Naive thymus-derived CD4-positive, alpha-beta T cell (primary cell): ENCODE measurements at regions of chr19 and their contacts with region 1.

Region 1: GRCh38 chr19:3062168-3063102 is at the start of gene TLE5:
- DNase-seq: peak; percentile 69 to 79 (median 76)
- ATAC-seq: peak; percentile 78
- H3K4me3 ChIP-seq: peak within 1 kb of the TSS; percentile 99
- H3K4me3 Mint-ChIP-seq: peak within 1 kb of the TSS; percentile 88 to 99 (median 94)
- H3K27ac ChIP-seq: peak within 1 kb of the TSS; percentile 90
- H3K27ac Mint-ChIP-seq: peak within 1 kb of the TSS; percentile 90 to 98 (median 95)
- H3K4me1 ChIP-seq: peaks cover 24 to 43% of the 10 kb centered on the region in 2 donors
- H3K4me1 Mint-ChIP-seq: peaks cover 13 to 45% (median 29%) of the 10 kb centered on the region in 7 donors
- H3K27me3 ChIP-seq: no peaks in the 10 kb centered on the region
- H3K27me3 Mint-ChIP-seq: peaks cover 0 to under 1% (median 0%) of the 10 kb centered on the region in 5 donors
- total RNA-seq, gene TLE5: 658 to 1,102 (median 755) TPM

Region 2: GRCh38 chr19:2820112-2820702 is 242.2 kb before region 1 on chr19:
- CTCF ChIA-PET with region 1: no interaction called
- POLR2A ChIA-PET with region 1: no interaction called
- intact Hi-C with region 1: loop called in 1 of 2 experiments (anchors 1 kb)
- DNase-seq: no peak
- ATAC-seq: no peak
- H3K4me3 ChIP-seq: peak overlapping the region; percentile 79
- H3K4me3 Mint-ChIP-seq: peak overlapping the region; percentile 79 to 90 (median 86)
- H3K27ac ChIP-seq: peak overlapping the region; percentile 76
- H3K27ac Mint-ChIP-seq: peak overlapping the region in 5 of 9 donors; percentile 22 to 80 (median 52)
- H3K4me1 ChIP-seq: peaks cover 3 to 4% of the 10 kb centered on the region in 2 donors
- H3K4me1 Mint-ChIP-seq: peaks cover 3 to 19% (median 6%) of the 10 kb centered on the region in 7 donors
- H3K27me3 ChIP-seq: no peaks in the 10 kb centered on the region
- H3K27me3 Mint-ChIP-seq: no peaks in the 10 kb centered on the region

Region 3: DNA sequence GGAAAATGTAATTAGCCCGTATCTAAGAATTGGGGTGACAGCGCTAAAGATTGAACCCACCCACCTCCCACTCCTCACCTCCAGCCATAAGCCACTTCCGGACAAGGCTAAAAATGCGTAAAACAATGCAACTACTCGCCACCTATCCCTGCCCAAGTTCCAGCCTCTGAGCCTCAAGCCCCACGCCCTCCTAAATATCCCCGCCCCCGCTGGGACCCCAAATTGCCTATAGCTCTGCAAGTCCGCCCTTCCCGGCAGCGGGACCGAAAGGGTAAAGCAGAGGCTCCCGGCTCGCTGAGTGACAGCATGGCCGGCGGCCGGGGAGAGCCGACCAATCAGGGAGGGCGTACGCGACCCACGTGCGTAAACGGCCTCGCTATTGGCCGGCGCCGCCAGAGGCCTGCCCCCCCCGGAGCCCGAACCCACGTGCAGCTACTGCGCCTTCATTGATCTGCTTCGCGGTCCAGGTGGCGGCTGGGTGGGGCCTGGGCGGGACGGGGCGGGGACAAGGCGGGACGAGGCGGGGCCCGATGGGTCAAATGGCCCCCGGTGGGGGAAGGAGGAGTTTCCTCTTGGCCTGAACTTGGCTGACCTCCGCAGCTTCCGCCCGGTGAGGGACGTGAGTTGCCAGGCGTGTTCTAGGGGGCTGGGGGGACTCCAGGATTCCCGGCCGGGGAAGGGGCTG is 85.3 kb before region 1 on chr19 and contains the start of gene TLE6:
- CTCF ChIA-PET with region 1: no interaction called
- POLR2A ChIA-PET with region 1: interaction called, 7 read pairs
- intact Hi-C with region 1: loop called (anchors 1 to 2 kb)
- DNase-seq: peak; percentile 82 to 94 (median 93)
- ATAC-seq: peak; percentile 99
- H3K4me3 ChIP-seq: peak within 1 kb of the TSS; percentile 75
- H3K4me3 Mint-ChIP-seq: peak within 1 kb of the TSS; percentile 88 to 98 (median 95)
- H3K27ac ChIP-seq: peak within 1 kb of the TSS; percentile 44
- H3K27ac Mint-ChIP-seq: peak within 1 kb of the TSS; percentile 63 to 95 (median 88)
- H3K4me1 ChIP-seq: peaks cover 10 to 12% of the 10 kb centered on the region in 2 donors
- H3K4me1 Mint-ChIP-seq: peaks cover 0 to 24% (median 18%) of the 10 kb centered on the region in 7 donors
- H3K27me3 ChIP-seq: no peaks in the 10 kb centered on the region
- H3K27me3 Mint-ChIP-seq: peaks cover 3 to 22% (median 9%) of the 10 kb centered on the region in 5 donors
- total RNA-seq, gene TLE6: 0.60 to 0.64 TPM in 2 of 5 experiments, not detected in the others

Region 4: DNA sequence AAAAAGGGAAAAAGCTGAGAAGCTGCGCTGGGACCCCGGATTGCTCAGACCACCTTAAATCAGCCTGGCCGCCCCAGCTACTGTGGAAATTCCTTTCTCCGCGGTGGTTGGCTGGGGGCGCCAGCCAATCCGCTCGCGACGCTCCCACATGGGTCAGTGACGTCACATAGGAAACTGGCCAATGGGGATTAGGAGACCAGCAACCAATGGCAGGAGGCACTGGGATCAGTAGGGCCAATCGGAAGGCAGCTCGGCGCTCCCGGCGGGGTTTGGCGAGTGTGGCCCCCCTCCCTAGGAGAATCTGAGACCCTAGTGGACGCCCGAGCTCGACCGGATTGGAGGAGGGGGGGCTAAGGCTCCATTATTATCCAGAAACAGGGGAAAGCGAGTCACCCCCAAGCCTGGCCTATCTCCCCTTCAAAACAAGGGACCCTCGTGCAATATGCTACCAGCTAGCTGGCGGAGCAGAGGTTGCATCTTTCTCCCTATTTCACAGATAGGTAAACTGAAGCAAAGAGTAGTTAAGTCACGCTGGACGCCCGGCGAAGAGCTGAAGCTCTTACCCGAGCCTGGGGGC is 26.8 kb before region 1 on chr19:
- CTCF ChIA-PET with region 1: interaction called, 18 read pairs
- POLR2A ChIA-PET with region 1: interaction called, 359 read pairs
- intact Hi-C with region 1: loop called (anchors 1 kb)
- DNase-seq: peak; percentile 77 to 97 (median 95)
- ATAC-seq: peak; percentile 95
- H3K4me3 ChIP-seq: peak overlapping the region; percentile 95
- H3K4me3 Mint-ChIP-seq: peak overlapping the region; percentile 88 to 97 (median 94)
- H3K27ac ChIP-seq: peak overlapping the region; percentile 76
- H3K27ac Mint-ChIP-seq: peak overlapping the region; percentile 92 to 99 (median 98)
- H3K4me1 ChIP-seq: peaks cover 11 to 16% of the 10 kb centered on the region in 2 donors
- H3K4me1 Mint-ChIP-seq: peaks cover 21 to 44% (median 31%) of the 10 kb centered on the region in 7 donors
- H3K27me3 ChIP-seq: no peaks in the 10 kb centered on the region
- H3K27me3 Mint-ChIP-seq: peaks cover 0 to 41% (median 0%) of the 10 kb centered on the region in 5 donors

Region 5: GRCh38 chr19:3075895-3076431 is 13.5 kb after region 1 on chr19:
- CTCF ChIA-PET with region 1: interaction called, 5 read pairs
- POLR2A ChIA-PET with region 1: interaction called, 7 read pairs
- intact Hi-C with region 1: loop called in 1 of 2 experiments (anchors 1 kb)
- DNase-seq: peak; percentile 63 to 85 (median 71)
- ATAC-seq: peak; percentile 99
- H3K4me3 ChIP-seq: no peak overlapping the region
- H3K4me3 Mint-ChIP-seq: peak overlapping the region in 4 of 10 donors; percentile 44 to 68 (median 50)
- H3K27ac ChIP-seq: no peak overlapping the region
- H3K27ac Mint-ChIP-seq: no peak overlapping the region
- H3K4me1 ChIP-seq: peaks cover 0 to 9% of the 10 kb centered on the region in 2 donors
- H3K4me1 Mint-ChIP-seq: peaks cover 0 to 10% (median 4%) of the 10 kb centered on the region in 7 donors
- H3K27me3 ChIP-seq: no peaks in the 10 kb centered on the region
- H3K27me3 Mint-ChIP-seq: peaks cover 0 to 6% (median 0%) of the 10 kb centered on the region in 5 donors

Region 6: GRCh38 chr19:3176603-3177501 is 114.4 kb after region 1 on chr19:
- CTCF ChIA-PET with region 1: no interaction called
- POLR2A ChIA-PET with region 1: interaction called, 10 read pairs
- intact Hi-C with region 1: no loop called
- DNase-seq: peak in 2 of 9 donors; percentile 50 to 65
- ATAC-seq: peak; percentile 66
- H3K4me3 ChIP-seq: peak overlapping the region; percentile 58
- H3K4me3 Mint-ChIP-seq: peak overlapping the region; percentile 74 to 95 (median 84)
- H3K27ac ChIP-seq: peak overlapping the region; percentile 61
- H3K27ac Mint-ChIP-seq: peak overlapping the region; percentile 86 to 99 (median 93)
- H3K4me1 ChIP-seq: peaks cover 22 to 23% of the 10 kb centered on the region in 2 donors
- H3K4me1 Mint-ChIP-seq: peaks cover 5 to 26% (median 21%) of the 10 kb centered on the region in 7 donors
- H3K27me3 ChIP-seq: no peaks in the 10 kb centered on the region
- H3K27me3 Mint-ChIP-seq: no peaks in the 10 kb centered on the region